WTC11 (cell line): ENCODE measurements at regions of chr16 and their contacts with region 1.

Region 1: DNA sequence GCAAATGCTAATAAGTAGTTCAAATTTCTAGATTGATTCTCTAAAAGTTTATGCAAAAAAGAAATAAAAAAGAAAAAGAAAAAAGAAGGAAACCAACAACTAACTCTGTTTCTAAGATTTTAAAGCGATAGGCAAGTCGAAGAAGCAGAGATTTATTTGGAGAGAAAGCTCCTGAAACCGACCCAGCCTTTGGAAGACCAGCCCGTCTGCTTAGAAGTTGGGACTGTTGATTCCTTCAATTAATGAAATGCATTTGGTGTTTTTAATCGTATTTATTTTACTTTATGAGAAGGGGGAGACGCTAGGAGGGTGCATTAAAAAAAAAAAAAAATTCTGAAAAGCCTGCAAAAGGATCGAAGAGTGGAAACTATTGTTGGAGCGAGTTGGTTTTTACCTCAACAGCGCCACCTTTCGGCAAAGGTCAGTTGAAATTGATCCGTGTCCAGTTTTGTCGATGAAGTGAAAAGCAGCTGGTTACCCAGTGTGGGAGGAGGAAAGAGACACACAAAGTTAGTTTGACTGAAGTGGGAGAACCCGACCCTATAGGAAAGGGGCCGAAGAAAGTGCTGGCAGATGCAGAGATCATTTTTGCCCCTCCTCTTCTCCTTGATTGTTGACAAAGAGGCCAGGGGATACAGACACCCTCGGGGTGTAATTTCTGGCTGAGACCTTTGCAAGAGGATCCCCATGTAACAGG is 1.5 kb upstream of the MAF start:
- DNase-seq: peak; percentile 83
- ATAC-seq: peak; percentile 5; the same call in 1 of the 2 replicates
- H3K4me3 Mint-ChIP-seq: peak overlapping the region; percentile 93
- H3K27ac Mint-ChIP-seq: no peak overlapping the region
- H3K4me1 Mint-ChIP-seq: peaks cover 32% of the 10 kb centered on the region
- H3K27me3 Mint-ChIP-seq: peaks cover 21% of the 10 kb centered on the region
- CTCF ChIP-seq: peak; percentile 78

Region 2: DNA sequence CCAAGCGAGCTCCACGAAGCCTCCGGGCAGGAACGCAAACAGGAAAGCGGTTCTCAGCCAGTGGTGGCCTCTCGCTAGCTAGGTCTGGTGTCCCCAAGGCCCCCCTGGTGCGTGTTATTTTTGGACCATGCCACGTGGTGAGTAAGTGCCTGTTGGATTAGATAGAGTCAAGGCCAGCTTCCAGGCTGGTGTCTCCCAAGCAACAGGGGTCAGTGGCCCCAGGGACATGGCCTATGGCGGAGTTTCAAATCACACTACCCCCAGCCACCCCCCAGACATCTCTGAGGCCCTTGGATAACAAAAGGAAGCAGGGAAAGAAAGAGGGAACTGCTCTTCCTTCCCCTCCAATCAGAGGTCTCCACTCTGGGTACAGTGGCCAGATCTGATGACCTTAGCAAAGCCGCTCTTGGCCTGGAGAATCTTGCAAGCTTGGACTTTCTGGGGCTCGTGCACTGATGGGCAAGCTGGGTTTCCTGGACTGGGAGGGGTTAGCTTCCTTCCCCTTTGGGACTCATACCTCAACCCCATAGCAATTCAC is 59.8 kb before region 1 on chr16:
- CTCF ChIA-PET with region 1: no interaction called
- POLR2A ChIA-PET with region 1: no interaction called
- DNase-seq: no peak
- ATAC-seq: no peak
- H3K4me3 Mint-ChIP-seq: no peak overlapping the region
- H3K27ac Mint-ChIP-seq: no peak overlapping the region
- H3K4me1 Mint-ChIP-seq: no peaks in the 10 kb centered on the region
- H3K27me3 Mint-ChIP-seq: no peaks in the 10 kb centered on the region
- CTCF ChIP-seq: no peak

Region 3: GRCh38 chr16:79587897-79588296 is 14.2 kb before region 1 on chr16:
- CTCF ChIA-PET with region 1: interaction called, 13 read pairs
- POLR2A ChIA-PET with region 1: no interaction called
- DNase-seq: no peak
- ATAC-seq: no peak
- H3K4me3 Mint-ChIP-seq: no peak overlapping the region
- H3K27ac Mint-ChIP-seq: no peak overlapping the region
- H3K4me1 Mint-ChIP-seq: peaks cover 44% of the 10 kb centered on the region
- H3K27me3 Mint-ChIP-seq: peaks cover 18% of the 10 kb centered on the region
- CTCF ChIP-seq: no peak

Region 4: GRCh38 chr16:79770244-79771064 is 168.4 kb after region 1 on chr16:
- CTCF ChIA-PET with region 1: interaction called, 12 read pairs
- POLR2A ChIA-PET with region 1: no interaction called
- DNase-seq: peak; percentile 87
- ATAC-seq: peak; percentile 97
- H3K4me3 Mint-ChIP-seq: peak overlapping the region; percentile 91
- H3K27ac Mint-ChIP-seq: peak overlapping the region; percentile 98
- H3K4me1 Mint-ChIP-seq: peaks cover 39% of the 10 kb centered on the region
- H3K27me3 Mint-ChIP-seq: peaks cover 6% of the 10 kb centered on the region
- CTCF ChIP-seq: no peak

Region 5: DNA sequence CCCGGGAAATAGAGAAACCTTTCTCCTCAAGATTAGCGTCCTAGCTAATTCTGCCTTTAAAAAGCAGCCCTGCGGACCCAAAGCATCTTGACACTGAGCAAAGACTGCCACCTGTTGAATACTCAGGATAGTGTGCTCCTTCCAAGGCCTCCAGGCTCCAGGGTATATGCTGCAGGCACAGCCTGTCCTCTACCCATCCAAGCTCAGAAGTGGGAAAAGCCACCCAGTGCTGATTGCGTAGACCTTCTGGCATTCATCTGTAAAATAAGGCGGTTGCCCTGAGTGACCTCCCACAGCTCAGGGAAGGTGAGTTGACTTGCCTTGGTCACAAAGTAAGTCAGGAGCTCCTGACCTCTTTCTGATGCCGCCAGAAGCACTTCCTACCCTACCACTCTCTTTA is 482.6 kb after region 1 on chr16:
- CTCF ChIA-PET with region 1: interaction called, 12 read pairs
- POLR2A ChIA-PET with region 1: no interaction called
- DNase-seq: peak; percentile 51
- ATAC-seq: peak; percentile 100
- H3K4me3 Mint-ChIP-seq: no peak overlapping the region
- H3K27ac Mint-ChIP-seq: no peak overlapping the region
- H3K4me1 Mint-ChIP-seq: peaks cover 7% of the 10 kb centered on the region; the same call in 1 of the 2 replicates
- H3K27me3 Mint-ChIP-seq: no peaks in the 10 kb centered on the region
- CTCF ChIP-seq: peak; percentile 40; the same call in 1 of the 2 replicates